AG04450 (cell line): ENCODE measurements at regions of chr20 and their contacts with region 1.

Region 1: DNA sequence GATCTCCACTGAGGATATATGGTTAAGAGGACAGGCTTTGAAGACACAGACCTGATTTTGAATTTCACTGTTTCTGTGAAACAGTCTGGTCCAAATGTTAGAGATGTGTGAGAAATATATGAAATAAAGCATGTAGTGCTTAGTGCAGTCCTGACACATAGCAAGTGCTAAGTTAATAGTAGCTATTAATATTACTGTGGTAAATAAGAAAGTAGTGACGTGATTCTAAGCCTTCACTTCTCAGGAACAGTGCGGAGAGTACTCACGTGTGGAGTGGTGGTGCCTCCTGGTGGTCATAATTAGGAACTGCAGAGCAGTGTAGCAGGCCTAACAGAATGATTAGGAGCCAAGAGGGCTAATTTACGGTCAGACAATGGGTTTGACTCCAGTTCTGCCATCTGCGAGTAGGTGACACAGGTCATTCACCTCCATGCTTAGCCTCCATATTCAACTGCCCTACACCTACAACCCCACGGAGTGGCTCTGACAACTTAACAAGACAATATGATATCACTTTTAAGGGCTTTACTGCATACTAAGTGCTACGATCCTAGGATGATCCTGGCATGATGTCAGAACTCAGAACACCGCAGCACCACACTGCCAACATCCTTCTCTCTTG is 106.2 kb downstream of the JPH2 start:
- DNase-seq: peak; percentile 61
- H3K4me3 ChIP-seq: no peak overlapping the region
- H3K27ac ChIP-seq: peak overlapping the region; percentile 42
- H3K27me3 ChIP-seq: no peaks in the 10 kb centered on the region
- CTCF ChIP-seq: peak; percentile 98

Region 2: GRCh38 chr20:43728044-43728529 is 352.7 kb before region 1 on chr20:
- CTCF ChIA-PET with region 1: interaction called, 14 read pairs
- POLR2A ChIA-PET with region 1: no interaction called
- DNase-seq: no peak
- H3K4me3 ChIP-seq: no peak overlapping the region
- H3K27ac ChIP-seq: no peak overlapping the region
- H3K27me3 ChIP-seq: no peaks in the 10 kb centered on the region
- CTCF ChIP-seq: no peak

Region 3: GRCh38 chr20:43749734-43750294 is 330.9 kb before region 1 on chr20:
- CTCF ChIA-PET with region 1: interaction called, 197 read pairs
- POLR2A ChIA-PET with region 1: interaction called, 4 read pairs
- DNase-seq: no peak
- H3K4me3 ChIP-seq: no peak overlapping the region
- H3K27ac ChIP-seq: no peak overlapping the region
- H3K27me3 ChIP-seq: no peaks in the 10 kb centered on the region
- CTCF ChIP-seq: peak; percentile 98

Region 4: DNA sequence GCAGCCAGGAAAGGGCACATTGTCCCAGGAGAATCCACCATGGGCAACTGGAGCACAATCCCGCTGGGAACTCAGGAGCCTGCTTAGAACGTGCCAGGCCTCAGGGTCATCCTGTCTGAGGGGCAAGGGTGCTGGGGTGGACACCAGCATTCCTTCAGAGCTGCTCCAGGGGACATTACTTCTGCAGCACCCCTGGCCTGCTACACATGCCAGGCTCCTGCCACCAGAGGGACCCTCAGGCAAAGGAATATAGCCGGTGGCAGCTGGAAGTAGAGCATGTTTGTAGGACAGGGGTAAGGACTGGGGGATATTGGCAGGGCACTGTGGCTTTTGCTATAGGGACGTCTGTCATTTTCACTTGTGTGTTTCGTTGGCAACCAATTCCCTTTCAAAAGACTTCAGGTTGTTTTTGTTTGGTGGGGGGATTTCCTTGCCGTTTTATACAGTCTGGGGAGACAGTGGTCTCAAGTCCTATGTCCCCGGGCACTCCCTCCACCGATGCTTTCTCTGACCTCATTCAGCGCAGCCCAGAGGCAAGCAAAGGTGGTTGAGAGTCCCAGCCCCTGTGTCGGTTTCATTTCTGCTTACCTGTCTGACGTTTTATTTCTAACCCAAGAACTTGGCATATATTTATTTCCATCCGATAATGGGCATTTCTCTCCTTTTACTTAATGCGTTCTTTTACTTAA is 24.6 kb before region 1 on chr20:
- CTCF ChIA-PET with region 1: interaction called, 14 read pairs
- POLR2A ChIA-PET with region 1: no interaction called
- DNase-seq: no peak
- H3K4me3 ChIP-seq: no peak overlapping the region
- H3K27ac ChIP-seq: no peak overlapping the region
- H3K27me3 ChIP-seq: no peaks in the 10 kb centered on the region
- CTCF ChIP-seq: peak; percentile 35

Region 5: GRCh38 chr20:44092551-44093248 is 11.9 kb after region 1 on chr20:
- CTCF ChIA-PET with region 1: interaction called, 17 read pairs
- POLR2A ChIA-PET with region 1: no interaction called
- DNase-seq: no peak
- H3K4me3 ChIP-seq: no peak overlapping the region
- H3K27ac ChIP-seq: no peak overlapping the region
- H3K27me3 ChIP-seq: no peaks in the 10 kb centered on the region
- CTCF ChIP-seq: peak; percentile 67